CD4-positive, alpha-beta memory T cell (primary cell): ENCODE measurements at regions of chr17 and their contacts with region 1.

Region 1: DNA sequence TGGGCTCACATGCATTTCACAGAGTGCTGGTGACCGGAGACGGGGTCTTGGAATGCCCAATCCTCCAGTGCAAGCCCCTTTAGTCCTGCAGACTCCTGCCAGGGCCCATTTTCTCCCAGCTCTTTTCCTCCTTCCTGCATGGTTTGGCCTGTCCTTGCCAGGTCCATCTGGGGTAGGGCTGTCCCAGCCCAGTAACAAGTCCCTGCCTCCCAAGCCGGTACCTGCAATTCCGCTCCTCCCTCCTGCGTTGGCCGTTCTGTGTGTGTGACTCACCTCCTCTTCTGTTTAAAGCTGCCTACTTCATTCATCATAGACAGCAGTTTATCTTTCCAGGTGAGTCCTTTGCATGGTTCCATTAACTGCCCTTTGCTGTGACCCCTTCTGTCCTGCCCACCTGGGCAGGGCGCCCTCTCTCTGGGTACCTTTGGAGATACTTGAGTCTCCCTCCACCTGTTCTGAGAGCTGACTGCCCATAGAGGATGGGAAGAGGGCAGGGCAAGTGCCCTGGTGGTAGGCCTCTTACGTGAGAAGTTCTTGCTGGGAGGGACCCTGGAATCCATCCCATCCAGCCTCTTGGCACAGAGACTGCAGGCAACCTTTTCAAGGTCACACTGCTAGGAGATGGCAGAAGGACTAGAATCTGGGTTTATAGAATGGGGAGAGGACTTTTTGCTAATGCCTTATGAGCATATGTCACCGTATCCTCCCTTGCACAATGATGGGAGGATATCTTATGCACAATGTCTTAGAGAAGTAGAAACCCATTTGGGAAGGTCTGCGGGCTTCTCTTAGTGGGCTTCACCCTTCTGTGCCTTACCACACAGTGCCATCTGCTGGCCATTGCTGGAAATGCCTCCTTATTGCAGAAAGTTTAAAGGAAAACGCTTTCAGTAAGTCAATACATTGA is 29.7 kb upstream of the LGALS9 start:
- DNase-seq: peak; percentile 66 to 75 (median 69)
- H3K4me3 ChIP-seq: no peak overlapping the region
- H3K4me3 Mint-ChIP-seq: no peak overlapping the region
- H3K27ac ChIP-seq: no peak overlapping the region
- H3K27ac Mint-ChIP-seq: peak overlapping the region in 2 of 7 donors; percentile 19 to 55
- H3K4me1 ChIP-seq: peaks cover 3% of the 10 kb centered on the region
- H3K4me1 Mint-ChIP-seq: peaks cover 0 to 5% (median 3%) of the 10 kb centered on the region in 4 donors
- H3K27me3 ChIP-seq: no peaks in the 10 kb centered on the region
- H3K27me3 Mint-ChIP-seq: no peaks in the 10 kb centered on the region

Region 2: DNA sequence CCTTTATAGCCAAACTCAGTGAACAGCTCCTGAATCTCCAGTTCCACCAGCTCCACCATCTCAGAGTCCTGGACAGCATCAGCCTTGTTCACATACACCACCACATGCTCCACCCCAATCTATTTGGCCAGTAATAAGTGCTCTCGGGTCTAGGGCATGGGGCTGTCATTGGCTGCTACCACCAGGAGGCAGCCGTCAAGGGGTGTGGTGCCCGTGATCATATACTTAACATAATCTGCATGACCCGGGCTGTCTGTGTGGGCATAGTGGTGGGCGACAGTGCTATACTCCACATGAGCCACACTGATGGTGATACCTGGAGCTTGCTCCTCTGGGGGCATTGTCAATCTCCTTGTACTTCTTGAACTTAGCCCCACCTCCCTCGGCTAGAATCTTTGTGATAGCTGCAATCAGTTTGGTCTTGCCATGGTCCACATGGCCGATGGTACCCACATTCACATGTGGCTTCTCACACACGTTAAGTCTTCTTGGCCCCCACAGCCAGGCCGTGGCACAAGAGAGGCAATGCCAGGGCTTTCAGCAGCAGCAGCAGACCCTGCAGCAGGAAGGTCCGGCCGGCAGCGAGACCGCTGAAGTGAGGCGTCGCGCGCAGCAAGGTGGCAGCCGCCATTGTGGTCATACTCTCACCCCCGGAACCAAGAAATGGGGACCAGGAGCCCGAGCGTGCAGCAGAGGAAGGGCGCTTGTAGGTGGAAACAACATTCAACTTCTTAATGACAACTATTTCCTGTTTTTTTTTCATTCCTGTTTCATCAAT is 517.7 kb before region 1 on chr17:
- CTCF ChIA-PET with region 1: no interaction called
- POLR2A ChIA-PET with region 1: no interaction called
- intact Hi-C with region 1: no loop called
- DNase-seq: no peak
- H3K4me3 ChIP-seq: no peak overlapping the region
- H3K4me3 Mint-ChIP-seq: no peak overlapping the region
- H3K27ac ChIP-seq: no peak overlapping the region
- H3K27ac Mint-ChIP-seq: no peak overlapping the region
- H3K4me1 ChIP-seq: no peaks in the 10 kb centered on the region
- H3K4me1 Mint-ChIP-seq: no peaks in the 10 kb centered on the region
- H3K27me3 ChIP-seq: no peaks in the 10 kb centered on the region
- H3K27me3 Mint-ChIP-seq: peaks cover 2 to 6% of the 10 kb centered on the region in 2 donors

Region 3: DNA sequence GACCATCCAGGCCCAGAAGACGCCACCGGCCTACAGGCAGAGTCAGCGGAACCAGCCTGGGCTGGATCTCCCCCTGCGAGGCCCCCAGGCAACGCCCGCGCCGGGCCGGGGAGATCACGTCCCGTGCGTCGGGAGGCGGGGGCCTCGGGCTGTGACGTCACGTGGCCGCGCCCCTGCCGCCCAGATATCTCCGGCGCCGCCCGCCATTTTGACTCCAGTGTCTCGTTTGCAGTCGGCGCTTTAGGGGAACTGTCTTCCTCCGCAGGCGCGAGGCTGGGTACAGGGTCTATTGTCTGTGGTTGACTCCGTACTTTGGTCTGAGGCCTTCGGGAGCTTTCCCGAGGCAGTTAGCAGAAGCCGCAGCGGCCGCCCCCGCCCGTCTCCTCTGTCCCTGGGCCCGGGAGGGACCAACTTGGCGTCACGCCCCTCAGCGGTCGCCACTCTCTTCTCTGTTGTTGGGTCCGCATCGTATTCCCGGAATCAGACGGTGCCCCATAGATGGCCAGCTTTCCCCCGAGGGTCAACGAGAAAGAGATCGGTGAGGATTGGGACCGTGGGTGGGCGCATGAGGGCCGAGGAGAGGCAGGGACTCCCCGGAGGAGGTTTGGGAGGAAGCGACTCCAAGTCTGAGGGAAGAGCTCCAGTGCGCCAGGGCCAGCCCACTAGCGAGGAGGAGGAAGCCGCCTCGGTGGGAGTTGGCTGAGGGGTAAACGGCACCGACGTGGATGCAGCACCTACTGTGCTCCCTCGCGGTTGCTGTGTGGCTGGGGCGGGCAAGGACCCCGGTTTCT is 307.2 kb before region 1 on chr17 and contains the start of gene WSB1:
- CTCF ChIA-PET with region 1: interaction called, 19 read pairs
- POLR2A ChIA-PET with region 1: interaction called, 8 read pairs
- intact Hi-C with region 1: loop called (anchors 2 kb)
- DNase-seq: peak; percentile 91 to 94 (median 93)
- H3K4me3 ChIP-seq: peak within 1 kb of the TSS; percentile 96 to 98
- H3K4me3 Mint-ChIP-seq: peak within 1 kb of the TSS; percentile 93 to 100 (median 97)
- H3K27ac ChIP-seq: peak within 1 kb of the TSS; percentile 99
- H3K27ac Mint-ChIP-seq: peak within 1 kb of the TSS; percentile 88 to 100 (median 100)
- H3K4me1 ChIP-seq: peaks cover 46% of the 10 kb centered on the region
- H3K4me1 Mint-ChIP-seq: peaks cover 24 to 55% (median 34%) of the 10 kb centered on the region in 4 donors
- H3K27me3 ChIP-seq: no peaks in the 10 kb centered on the region
- H3K27me3 Mint-ChIP-seq: peaks cover 0 to 1% of the 10 kb centered on the region in 2 donors
- total RNA-seq, gene WSB1: 122 to 130 TPM

Region 4: GRCh38 chr17:27360507-27360906 is 240.8 kb before region 1 on chr17:
- CTCF ChIA-PET with region 1: interaction called, 146 read pairs
- POLR2A ChIA-PET with region 1: no interaction called
- intact Hi-C with region 1: no loop called
- DNase-seq: peak in 2 of 5 donors; percentile 7 to 10
- H3K4me3 ChIP-seq: no peak overlapping the region
- H3K4me3 Mint-ChIP-seq: peak overlapping the region in 4 of 8 donors; percentile 14 to 69 (median 33)
- H3K27ac ChIP-seq: no peak overlapping the region
- H3K27ac Mint-ChIP-seq: peak overlapping the region in 5 of 7 donors; percentile 1 to 57 (median 23)
- H3K4me1 ChIP-seq: peaks cover 12% of the 10 kb centered on the region
- H3K4me1 Mint-ChIP-seq: peaks cover 10 to 19% (median 14%) of the 10 kb centered on the region in 4 donors
- H3K27me3 ChIP-seq: no peaks in the 10 kb centered on the region
- H3K27me3 Mint-ChIP-seq: no peaks in the 10 kb centered on the region

Region 5: DNA sequence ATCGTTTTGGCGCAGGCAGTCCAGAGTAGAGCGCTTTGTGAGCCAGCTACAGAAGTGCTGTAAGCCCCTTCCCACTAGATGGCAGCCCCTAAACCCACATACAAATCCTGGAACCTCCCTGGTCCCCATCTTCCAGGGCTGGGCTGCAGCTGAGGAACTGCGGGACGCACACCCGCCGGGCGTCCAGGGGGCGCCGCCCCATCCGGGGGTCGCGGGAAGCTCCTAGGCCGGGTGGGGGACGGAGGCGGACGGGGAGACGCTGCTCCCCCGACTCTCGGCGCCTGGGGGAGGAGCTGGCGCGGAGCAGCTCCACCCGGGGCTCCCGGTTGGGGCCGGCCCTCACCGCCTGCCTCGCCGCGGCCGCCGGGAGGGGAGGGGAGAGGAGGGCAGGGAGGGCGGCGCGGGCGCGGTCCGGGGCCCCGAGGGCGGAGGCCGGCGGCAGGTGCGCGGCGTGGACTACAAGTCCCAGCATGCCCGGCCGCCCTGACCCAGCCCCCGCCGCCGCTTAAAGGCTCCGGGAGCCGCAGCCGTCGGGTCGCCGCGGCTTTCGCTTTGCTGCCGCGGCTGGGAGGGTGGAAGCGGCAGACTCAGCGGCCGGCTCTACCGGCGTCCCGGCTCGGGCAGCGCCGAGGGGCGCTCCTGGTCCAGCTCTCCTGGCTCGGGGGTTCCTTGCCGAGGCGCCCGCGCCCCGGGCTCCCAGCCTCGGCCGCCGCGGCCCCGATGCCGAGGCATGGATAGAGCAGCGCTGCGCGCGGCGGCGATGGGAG is 145.2 kb before region 1 on chr17 and contains the start of gene KSR1:
- CTCF ChIA-PET with region 1: interaction called, 43 read pairs
- POLR2A ChIA-PET with region 1: interaction called, 18 read pairs
- intact Hi-C with region 1: loop called (anchors 1 kb)
- DNase-seq: peak; percentile 80 to 82 (median 82)
- H3K4me3 ChIP-seq: peak within 1 kb of the TSS; percentile 61 to 72
- H3K4me3 Mint-ChIP-seq: peak within 1 kb of the TSS; percentile 87 to 97 (median 90)
- H3K27ac ChIP-seq: peak within 1 kb of the TSS; percentile 60
- H3K27ac Mint-ChIP-seq: peak within 1 kb of the TSS; percentile 81 to 95 (median 88)
- H3K4me1 ChIP-seq: peaks cover 22% of the 10 kb centered on the region
- H3K4me1 Mint-ChIP-seq: peaks cover 19 to 38% (median 28%) of the 10 kb centered on the region in 4 donors
- H3K27me3 ChIP-seq: no peaks in the 10 kb centered on the region
- H3K27me3 Mint-ChIP-seq: no peaks in the 10 kb centered on the region
- total RNA-seq, gene KSR1: 33.2 to 40.0 TPM

Region 6: GRCh38 chr17:27586203-27586721 is 15.1 kb before region 1 on chr17:
- CTCF ChIA-PET with region 1: interaction called, 69 read pairs
- POLR2A ChIA-PET with region 1: no interaction called
- intact Hi-C with region 1: no loop called
- DNase-seq: no peak
- H3K4me3 ChIP-seq: no peak overlapping the region
- H3K4me3 Mint-ChIP-seq: no peak overlapping the region
- H3K27ac ChIP-seq: no peak overlapping the region
- H3K27ac Mint-ChIP-seq: peak overlapping the region in 1 of 7 donors; percentile 60
- H3K4me1 ChIP-seq: no peaks in the 10 kb centered on the region
- H3K4me1 Mint-ChIP-seq: peaks cover 0 to 4% (median 0%) of the 10 kb centered on the region in 4 donors
- H3K27me3 ChIP-seq: no peaks in the 10 kb centered on the region
- H3K27me3 Mint-ChIP-seq: no peaks in the 10 kb centered on the region

Region 7: GRCh38 chr17:27646232-27646631 is 44.9 kb after region 1 on chr17:
- CTCF ChIA-PET with region 1: interaction called, 358 read pairs
- POLR2A ChIA-PET with region 1: no interaction called
- intact Hi-C with region 1: loop called (anchors 1 kb)
- DNase-seq: no peak
- H3K4me3 ChIP-seq: no peak overlapping the region
- H3K4me3 Mint-ChIP-seq: no peak overlapping the region
- H3K27ac ChIP-seq: no peak overlapping the region
- H3K27ac Mint-ChIP-seq: no peak overlapping the region
- H3K4me1 ChIP-seq: no peaks in the 10 kb centered on the region
- H3K4me1 Mint-ChIP-seq: peaks cover 0 to 1% (median 0%) of the 10 kb centered on the region in 4 donors
- H3K27me3 ChIP-seq: no peaks in the 10 kb centered on the region
- H3K27me3 Mint-ChIP-seq: no peaks in the 10 kb centered on the region

Region 8: GRCh38 chr17:27692766-27693165 is 91.4 kb after region 1 on chr17:
- CTCF ChIA-PET with region 1: no interaction called
- POLR2A ChIA-PET with region 1: no interaction called
- intact Hi-C with region 1: no loop called
- DNase-seq: no peak
- H3K4me3 ChIP-seq: no peak overlapping the region
- H3K4me3 Mint-ChIP-seq: no peak overlapping the region
- H3K27ac ChIP-seq: no peak overlapping the region
- H3K27ac Mint-ChIP-seq: no peak overlapping the region
- H3K4me1 ChIP-seq: no peaks in the 10 kb centered on the region
- H3K4me1 Mint-ChIP-seq: peaks cover 0 to 2% (median 0%) of the 10 kb centered on the region in 4 donors
- H3K27me3 ChIP-seq: no peaks in the 10 kb centered on the region
- H3K27me3 Mint-ChIP-seq: peaks cover 5 to 8% of the 10 kb centered on the region in 2 donors

Region 9: GRCh38 chr17:27762527-27763305 is 161.4 kb after region 1 on chr17:
- CTCF ChIA-PET with region 1: no interaction called
- POLR2A ChIA-PET with region 1: no interaction called
- intact Hi-C with region 1: no loop called
- DNase-seq: no peak
- H3K4me3 ChIP-seq: no peak overlapping the region
- H3K4me3 Mint-ChIP-seq: no peak overlapping the region
- H3K27ac ChIP-seq: no peak overlapping the region
- H3K27ac Mint-ChIP-seq: no peak overlapping the region
- H3K4me1 ChIP-seq: no peaks in the 10 kb centered on the region
- H3K4me1 Mint-ChIP-seq: peaks cover 0 to 3% (median 0%) of the 10 kb centered on the region in 4 donors
- H3K27me3 ChIP-seq: no peaks in the 10 kb centered on the region
- H3K27me3 Mint-ChIP-seq: peaks cover 4 to 5% of the 10 kb centered on the region in 2 donors

Region 10: DNA sequence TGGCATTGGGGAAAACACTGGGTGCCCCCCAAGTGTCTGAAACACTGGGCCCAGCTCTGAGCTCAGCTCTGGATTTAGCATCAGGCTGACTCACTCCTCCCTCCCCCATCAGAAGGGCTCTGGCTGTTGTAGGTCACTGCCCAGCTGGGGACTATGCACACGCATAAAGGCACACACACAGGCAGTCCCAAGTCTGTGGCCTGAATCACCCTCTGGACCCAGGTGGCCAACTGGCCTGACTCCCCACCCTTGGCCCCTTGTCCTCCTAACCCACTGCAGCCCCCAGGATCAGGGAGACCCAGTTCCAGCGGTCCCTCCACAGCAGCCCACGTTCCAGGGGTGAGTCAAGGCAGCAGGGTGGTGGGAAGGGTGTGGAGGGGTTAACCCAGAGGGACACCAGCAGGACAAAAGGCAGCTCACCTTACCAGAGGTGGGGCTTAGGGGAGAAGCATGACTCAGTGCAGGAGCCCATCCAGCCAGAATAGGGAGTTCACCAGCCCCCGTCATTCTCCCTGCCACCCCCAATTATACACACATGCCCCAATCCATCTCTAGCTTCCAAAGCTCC is 1531.9 kb after region 1 on chr17:
- CTCF ChIA-PET with region 1: no interaction called
- POLR2A ChIA-PET with region 1: no interaction called
- intact Hi-C with region 1: no loop called
- DNase-seq: no peak
- H3K4me3 ChIP-seq: no peak overlapping the region
- H3K4me3 Mint-ChIP-seq: no peak overlapping the region
- H3K27ac ChIP-seq: no peak overlapping the region
- H3K27ac Mint-ChIP-seq: peak overlapping the region in 3 of 7 donors; percentile 30 to 53 (median 46)
- H3K4me1 ChIP-seq: peaks cover 62% of the 10 kb centered on the region
- H3K4me1 Mint-ChIP-seq: peaks cover 30 to 72% (median 43%) of the 10 kb centered on the region in 4 donors
- H3K27me3 ChIP-seq: no peaks in the 10 kb centered on the region
- H3K27me3 Mint-ChIP-seq: no peaks in the 10 kb centered on the region